ENCODE measurements at regions of chr5 and their contacts with region 1.

Region 1: DNA sequence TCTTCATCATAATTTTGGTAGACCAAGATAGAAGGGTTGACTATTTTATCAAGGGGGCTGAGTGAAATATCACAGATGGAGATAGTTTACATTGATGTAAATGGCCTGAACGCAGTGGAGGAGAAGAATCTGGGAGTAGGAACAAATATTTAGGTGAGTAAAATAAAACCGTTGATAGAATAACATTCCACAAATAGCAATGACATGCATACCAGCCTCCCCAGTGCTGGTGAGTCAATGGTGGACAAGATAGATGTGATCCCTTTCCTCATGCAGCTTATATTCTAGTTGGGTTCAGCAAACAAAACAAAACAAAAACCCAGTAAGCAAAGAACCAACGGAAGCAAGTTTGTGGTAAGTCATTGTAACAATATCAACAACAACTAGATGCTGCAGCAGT is 385.2 kb downstream of the FAM170A start:
- DNase-seq: no peak
- H3K4me3 ChIP-seq: no peak overlapping the region
- H3K27ac ChIP-seq: no peak overlapping the region
- H3K4me1 ChIP-seq: no peaks in the 10 kb centered on the region
- H3K27me3 ChIP-seq: no peaks in the 10 kb centered on the region
- CTCF ChIP-seq: no peak

Region 2: GRCh38 chr5:119957076-119957475 is 57.5 kb before region 1 on chr5:
- intact Hi-C with region 1: loop called (anchors 5 kb)
- DNase-seq: no peak
- H3K4me3 ChIP-seq: no peak overlapping the region
- H3K27ac ChIP-seq: no peak overlapping the region
- H3K4me1 ChIP-seq: no peaks in the 10 kb centered on the region
- H3K27me3 ChIP-seq: no peaks in the 10 kb centered on the region
- CTCF ChIP-seq: no peak

Measured in ascending aorta (tissue), 2 donors.